ENCODE measurements at regions of chr7 and their contacts with region 1.

Region 1: DNA sequence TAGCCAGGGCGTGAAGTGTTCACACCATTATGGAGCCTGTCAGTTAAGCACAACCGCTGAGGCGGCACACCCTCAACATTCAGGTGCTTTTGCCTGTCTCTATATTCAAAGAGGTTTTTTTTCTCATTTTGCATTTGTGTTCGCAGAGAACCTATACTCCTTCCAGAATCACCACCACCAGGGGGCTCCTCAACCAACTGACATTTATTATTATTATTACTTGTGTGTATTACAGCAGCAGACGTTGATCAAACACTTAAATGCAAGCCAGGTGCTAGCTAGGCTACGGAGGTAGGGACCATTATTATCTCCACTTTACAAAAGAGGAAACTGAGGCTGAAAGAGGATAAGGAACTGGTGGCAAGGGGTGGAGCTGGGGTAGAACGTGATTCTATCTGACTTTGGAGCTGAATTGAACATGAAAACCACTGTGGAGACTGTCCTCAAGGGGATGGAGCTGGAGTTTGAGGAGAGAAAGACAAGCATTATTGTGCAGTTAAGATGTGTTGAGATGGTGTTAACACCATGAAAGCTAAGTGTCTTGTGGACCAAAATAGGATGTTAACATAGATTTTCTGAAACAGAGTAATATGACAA is 133.8 kb upstream of the PLXNA4 start:
- DNase-seq: peak; percentile 10
- ATAC-seq: peak; percentile 26; the same call in 1 of the 3 replicates
- H3K4me3 ChIP-seq: no peak overlapping the region
- H3K27ac ChIP-seq: no peak overlapping the region
- H3K4me1 ChIP-seq: no peaks in the 10 kb centered on the region
- H3K27me3 ChIP-seq: peaks cover 0 to 4% of the 10 kb centered on the region in 2 experiments; a peak in 1 of 5 replicates
- CTCF ChIP-seq: no peak
- EP300 ChIP-seq: no peak
- POLR2A ChIP-seq: no peak
- RAD21 ChIP-seq: no peak

Region 2: DNA sequence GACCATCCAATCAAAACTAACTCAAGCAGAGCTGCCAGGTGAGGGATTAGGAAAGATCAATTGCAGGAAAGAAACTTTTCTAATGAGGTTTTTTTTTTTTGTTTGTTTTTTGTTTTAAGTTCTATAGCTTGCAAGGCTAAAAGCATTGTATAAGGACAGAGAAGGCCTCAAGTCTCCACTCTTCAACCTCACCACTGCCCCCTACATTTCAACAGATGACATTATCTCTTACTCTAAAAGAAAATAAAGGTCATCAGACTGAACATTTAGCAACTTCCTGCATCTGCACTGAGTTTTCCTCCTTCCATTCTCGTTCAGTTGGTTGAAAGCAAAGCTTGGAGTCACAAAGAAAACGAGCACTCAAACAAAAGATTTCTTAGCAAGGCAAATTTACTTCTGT is 497.6 kb after region 1 on chr7:
- CTCF ChIA-PET with region 1: interaction called, 3 read pairs
- POLR2A ChIA-PET with region 1: no interaction called
- in situ Hi-C with region 1: loop called (anchors 25 kb)
- intact Hi-C with region 1: no loop called
- DNase-seq: peak; percentile 21
- ATAC-seq: peak; percentile 67
- H3K4me3 ChIP-seq: no peak overlapping the region
- H3K27ac ChIP-seq: no peak overlapping the region
- H3K4me1 ChIP-seq: no peaks in the 10 kb centered on the region
- H3K27me3 ChIP-seq: 0 out of 5 replicates have a peak, but pooled peaks cover 0 to 3% of the 10 kb centered on the region in 2 experiments
- CTCF ChIP-seq: peak; percentile 35; the same call in 1 of the 2 replicates
- EP300 ChIP-seq: no peak
- POLR2A ChIP-seq: no peak
- RAD21 ChIP-seq: no peak

Region 3: DNA sequence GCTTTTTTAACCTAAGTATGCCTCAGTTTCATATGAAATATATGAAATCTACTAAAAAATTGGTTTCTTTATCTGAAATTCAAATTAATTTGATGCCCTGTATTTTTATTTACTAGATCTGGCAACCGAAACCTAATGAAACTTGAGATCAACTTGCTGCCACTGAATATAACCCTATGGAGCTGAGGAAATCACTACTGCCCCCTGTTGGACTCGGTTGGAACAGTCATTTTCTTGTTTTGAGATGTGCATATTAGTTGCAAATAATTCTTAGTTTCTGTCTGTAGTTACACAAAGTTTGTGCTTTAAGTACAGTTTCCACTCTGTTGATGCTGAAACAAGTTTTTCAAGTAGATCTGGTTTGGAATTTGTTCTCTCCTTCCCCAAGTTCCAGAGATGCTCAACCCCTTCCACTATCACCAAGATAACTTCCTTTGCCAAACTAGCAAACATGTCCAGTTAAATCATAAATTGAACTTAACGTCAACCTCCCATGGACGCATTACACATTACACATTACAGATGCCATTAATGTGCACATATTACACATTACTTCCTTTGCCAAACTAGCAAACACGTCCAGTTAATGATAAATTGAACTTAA is 520.6 kb after region 1 on chr7:
- CTCF ChIA-PET with region 1: interaction called, 4 read pairs
- POLR2A ChIA-PET with region 1: no interaction called
- in situ Hi-C with region 1: no loop called
- intact Hi-C with region 1: loop called (anchors 10 kb)
- DNase-seq: peak; percentile 36
- ATAC-seq: peak; percentile 47; the same call in 1 of the 3 replicates
- H3K4me3 ChIP-seq: no peak overlapping the region
- H3K27ac ChIP-seq: no peak overlapping the region
- H3K4me1 ChIP-seq: no peaks in the 10 kb centered on the region
- H3K27me3 ChIP-seq: no peaks in the 10 kb centered on the region
- CTCF ChIP-seq: peak; percentile 56
- EP300 ChIP-seq: no peak
- POLR2A ChIP-seq: no peak
- RAD21 ChIP-seq: no peak

Region 4: GRCh38 chr7:133344275-133344674 is 634.2 kb after region 1 on chr7:
- CTCF ChIA-PET with region 1: no interaction called
- POLR2A ChIA-PET with region 1: no interaction called
- in situ Hi-C with region 1: no loop called
- intact Hi-C with region 1: loop called (anchors 5 kb)
- DNase-seq: no peak
- ATAC-seq: no peak
- H3K4me3 ChIP-seq: no peak overlapping the region
- H3K27ac ChIP-seq: no peak overlapping the region
- H3K4me1 ChIP-seq: no peaks in the 10 kb centered on the region
- H3K27me3 ChIP-seq: no peaks in the 10 kb centered on the region
- CTCF ChIP-seq: peak; percentile 28
- EP300 ChIP-seq: no peak
- POLR2A ChIP-seq: no peak
- RAD21 ChIP-seq: no peak

Region 5: DNA sequence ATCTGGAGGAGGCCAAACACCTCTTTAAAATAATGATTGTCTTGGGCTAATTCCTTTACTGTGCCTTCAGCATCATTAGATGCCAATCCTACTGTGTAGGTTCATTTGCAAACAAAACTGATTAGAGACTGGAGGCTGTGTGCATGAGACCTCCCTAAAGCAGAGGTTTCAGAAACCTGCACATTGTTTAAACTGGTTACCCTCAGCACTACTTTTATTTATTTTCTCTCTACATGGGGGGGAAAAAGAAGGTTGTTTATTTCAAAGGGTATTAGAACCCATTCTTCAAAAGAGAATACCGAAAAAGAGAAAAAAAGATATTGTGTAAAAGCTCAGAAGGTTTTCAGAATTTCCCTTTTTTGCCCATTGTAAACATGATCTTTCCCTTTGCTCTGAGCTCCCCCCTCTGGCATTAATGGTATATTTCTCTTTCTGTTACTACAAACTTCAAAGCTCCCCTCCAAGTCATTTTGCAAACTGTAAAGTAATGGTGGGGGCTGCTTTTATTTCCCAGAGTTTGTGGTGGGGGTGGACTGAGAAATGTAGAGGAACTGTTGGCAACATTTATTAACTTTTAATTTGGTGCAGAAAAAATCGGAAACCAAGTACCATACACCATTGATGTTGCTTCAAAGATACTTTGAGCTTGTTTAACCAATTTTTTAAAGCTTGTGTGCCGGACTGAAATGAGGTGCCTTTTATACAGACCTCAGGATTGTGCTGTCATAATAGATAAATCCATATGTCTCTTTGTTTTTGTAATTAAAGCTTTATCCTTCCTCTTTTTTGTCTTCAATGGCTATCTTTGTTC is 724.2 kb after region 1 on chr7:
- CTCF ChIA-PET with region 1: interaction called, 3 read pairs
- POLR2A ChIA-PET with region 1: no interaction called
- in situ Hi-C with region 1: loop called (anchors 25 kb)
- intact Hi-C with region 1: loop called (anchors 1 kb)
- DNase-seq: peak; percentile 24
- ATAC-seq: peak; percentile 60; the same call in 2 of the 3 replicates
- H3K4me3 ChIP-seq: no peak overlapping the region
- H3K27ac ChIP-seq: no peak overlapping the region
- H3K4me1 ChIP-seq: peaks cover 21% of the 10 kb centered on the region
- H3K27me3 ChIP-seq: no peaks in the 10 kb centered on the region
- CTCF ChIP-seq: peak; percentile 57
- EP300 ChIP-seq: no peak
- POLR2A ChIP-seq: no peak
- RAD21 ChIP-seq: peak; percentile 49; the same call in 1 of the 2 replicates

Region 6: DNA sequence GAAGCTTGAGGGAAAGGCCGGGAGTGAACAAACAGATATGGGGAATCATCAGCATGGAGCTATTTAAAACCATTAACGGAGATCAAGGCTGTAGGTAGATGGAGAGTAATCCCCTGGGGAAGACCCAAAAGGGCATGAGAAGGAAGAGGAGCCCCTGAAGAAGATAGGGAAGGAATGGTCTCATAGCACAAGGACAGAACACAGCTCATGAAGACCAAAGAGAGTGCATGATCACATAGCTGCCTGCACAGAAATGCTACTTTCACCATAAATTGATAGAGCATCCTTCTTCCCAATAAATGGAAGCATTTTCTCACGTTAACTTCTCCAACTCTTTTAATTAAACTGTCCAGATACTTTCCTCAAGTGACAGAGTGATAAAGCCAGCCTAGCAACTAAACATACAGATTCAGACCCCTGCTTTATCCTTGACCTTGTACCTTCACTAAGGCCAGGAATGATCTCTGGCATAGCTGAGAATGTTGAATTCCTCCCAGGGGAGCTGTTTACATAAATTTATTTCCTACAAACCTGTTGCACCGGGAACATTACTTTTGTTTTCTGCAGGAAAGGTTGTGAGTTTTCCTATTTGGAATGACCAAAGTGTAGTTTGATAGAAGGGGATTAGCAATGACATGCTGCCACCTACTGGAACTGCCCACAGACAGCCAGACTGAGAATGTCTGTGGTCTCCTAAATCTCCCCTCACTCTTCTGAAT is 1306.3 kb after region 1 on chr7:
- CTCF ChIA-PET with region 1: interaction called, 3 read pairs
- POLR2A ChIA-PET with region 1: no interaction called
- in situ Hi-C with region 1: no loop called
- intact Hi-C with region 1: loop called (anchors 2 kb)
- DNase-seq: peak; percentile 21
- ATAC-seq: peak; percentile 80
- H3K4me3 ChIP-seq: no peak overlapping the region
- H3K27ac ChIP-seq: no peak overlapping the region
- H3K4me1 ChIP-seq: peaks cover 13% of the 10 kb centered on the region
- H3K27me3 ChIP-seq: no peaks in the 10 kb centered on the region
- CTCF ChIP-seq: peak; percentile 78
- EP300 ChIP-seq: no peak
- POLR2A ChIP-seq: no peak
- RAD21 ChIP-seq: no peak